HepG2 (cell line): ENCODE measurements at regions of chr7 and their contacts with region 1.

Region 1: GRCh38 chr7:144127703-144128334 is 4.8 kb downstream of the OR2A14 start:
- DNase-seq: peak; percentile 74
- ATAC-seq: peak; percentile 100
- H3K4me3 ChIP-seq: no peak overlapping the region
- H3K27ac ChIP-seq: no peak overlapping the region
- H3K4me1 ChIP-seq: no peaks in the 10 kb centered on the region
- H3K27me3 ChIP-seq: no peaks in the 10 kb centered on the region
- CTCF ChIP-seq: peak; percentile 84
- EP300 ChIP-seq: no peak
- POLR2A ChIP-seq: no peak
- RAD21 ChIP-seq: peak; percentile 69

Region 2: DNA sequence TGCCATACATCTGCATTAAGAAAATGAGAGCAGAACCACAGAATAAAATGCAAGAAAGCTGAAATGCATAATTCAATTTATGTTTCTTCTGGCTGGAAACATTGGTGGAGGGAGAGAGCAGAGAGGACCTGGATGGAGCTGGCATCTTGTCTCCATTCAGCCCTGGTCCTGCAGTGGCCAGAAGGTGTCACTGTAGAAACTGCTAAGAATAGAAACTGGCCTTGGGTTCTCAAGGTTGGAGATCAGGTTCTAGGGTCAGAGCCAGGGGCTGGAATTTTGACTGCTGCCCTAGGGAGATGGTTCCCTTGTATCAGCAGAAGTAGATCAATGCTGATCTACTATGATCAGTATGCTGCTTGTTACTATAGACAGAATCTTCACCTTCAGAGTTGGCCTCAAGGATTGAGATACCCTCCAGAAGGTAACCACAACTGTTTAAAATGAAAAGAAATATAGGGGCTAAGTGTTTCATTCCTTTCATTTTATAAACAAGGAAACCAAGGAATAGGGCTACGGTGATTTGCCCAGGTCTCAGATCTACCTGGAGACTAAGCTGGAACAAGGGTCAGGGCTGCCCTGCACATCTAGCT is 637.0 kb before region 1 on chr7:
- CTCF ChIA-PET with region 1: no interaction called
- POLR2A ChIA-PET with region 1: no interaction called
- in situ Hi-C with region 1: no loop called
- intact Hi-C with region 1: loop called (anchors 2 kb)
- DNase-seq: peak; percentile 30
- ATAC-seq: peak; percentile 95
- H3K4me3 ChIP-seq: no peak overlapping the region
- H3K27ac ChIP-seq: no peak overlapping the region
- H3K4me1 ChIP-seq: no peaks in the 10 kb centered on the region
- H3K27me3 ChIP-seq: no peaks in the 10 kb centered on the region
- CTCF ChIP-seq: peak; percentile 67
- EP300 ChIP-seq: no peak
- POLR2A ChIP-seq: no peak
- RAD21 ChIP-seq: no peak

Region 3: GRCh38 chr7:144074373-144074772 is 53.4 kb before region 1 on chr7:
- CTCF ChIA-PET with region 1: no interaction called
- POLR2A ChIA-PET with region 1: no interaction called
- in situ Hi-C with region 1: no loop called
- intact Hi-C with region 1: no loop called
- DNase-seq: no peak
- ATAC-seq: no peak; the same call in 2 of the 3 replicates
- H3K4me3 ChIP-seq: no peak overlapping the region
- H3K27ac ChIP-seq: no peak overlapping the region
- H3K4me1 ChIP-seq: no peaks in the 10 kb centered on the region
- H3K27me3 ChIP-seq: no peaks in the 10 kb centered on the region
- CTCF ChIP-seq: peak; percentile 29; the same call in 1 of the 2 replicates
- EP300 ChIP-seq: no peak
- POLR2A ChIP-seq: no peak
- RAD21 ChIP-seq: no peak